AG04450 (cell line): ENCODE measurements at regions of chr6 and their contacts with region 1.

Region 1: DNA sequence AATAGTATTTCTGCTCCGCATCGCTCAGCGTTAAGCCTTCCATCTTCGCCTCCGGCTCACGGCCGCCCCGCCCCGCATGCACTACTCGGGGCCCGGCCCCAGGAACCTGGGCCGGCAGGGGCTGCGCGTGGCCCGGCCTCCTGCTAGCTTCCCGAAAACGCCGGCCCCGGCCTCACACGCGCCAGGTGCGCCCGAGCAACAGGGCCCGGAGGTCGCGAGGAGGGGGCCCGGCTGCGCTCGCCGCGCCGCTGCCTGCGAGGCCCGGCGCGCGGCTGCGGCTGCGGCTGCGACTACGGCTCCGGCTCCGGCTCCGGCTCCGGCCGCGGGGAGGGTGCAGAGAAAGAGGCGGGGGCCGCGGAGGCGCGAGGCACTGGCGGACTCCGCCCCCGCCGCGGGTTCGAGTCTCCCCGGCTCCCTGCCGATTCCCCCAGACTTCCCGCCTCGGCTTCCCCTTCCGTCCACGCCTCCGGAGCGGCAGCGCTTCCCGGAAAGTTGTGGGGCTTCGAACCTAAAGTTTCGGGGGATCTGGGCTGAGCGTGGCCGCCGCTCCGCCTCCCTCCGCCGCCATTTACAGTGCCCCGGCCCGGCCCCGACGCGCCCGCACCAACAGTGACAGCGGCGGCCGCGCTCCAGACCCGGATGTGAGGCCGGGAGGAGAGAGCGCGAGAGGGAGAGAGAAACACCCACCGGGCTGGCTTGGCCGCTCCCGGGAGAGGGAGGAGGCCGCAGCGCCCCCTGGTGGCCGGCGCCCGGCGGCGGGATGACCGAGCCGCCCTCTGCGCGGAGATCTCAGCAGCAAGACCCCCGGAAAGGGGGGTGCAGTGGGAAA is at the start of gene REPS1:
- DNase-seq: peak; percentile 61
- H3K4me3 ChIP-seq: peak within 1 kb of the TSS; percentile 85
- H3K27ac ChIP-seq: peak within 1 kb of the TSS; percentile 52
- H3K27me3 ChIP-seq: no peaks in the 10 kb centered on the region
- CTCF ChIP-seq: peak; percentile 82
- polyA plus RNA-seq, gene REPS1: 30.5 and 36.6 TPM in 2 replicates

Region 2: GRCh38 chr6:138817822-138818308 is 170.0 kb before region 1 on chr6:
- CTCF ChIA-PET with region 1: interaction called, 86 read pairs
- POLR2A ChIA-PET with region 1: no interaction called
- DNase-seq: peak; percentile 4
- H3K4me3 ChIP-seq: no peak overlapping the region
- H3K27ac ChIP-seq: no peak overlapping the region
- H3K27me3 ChIP-seq: no peaks in the 10 kb centered on the region
- CTCF ChIP-seq: no peak

Region 3: DNA sequence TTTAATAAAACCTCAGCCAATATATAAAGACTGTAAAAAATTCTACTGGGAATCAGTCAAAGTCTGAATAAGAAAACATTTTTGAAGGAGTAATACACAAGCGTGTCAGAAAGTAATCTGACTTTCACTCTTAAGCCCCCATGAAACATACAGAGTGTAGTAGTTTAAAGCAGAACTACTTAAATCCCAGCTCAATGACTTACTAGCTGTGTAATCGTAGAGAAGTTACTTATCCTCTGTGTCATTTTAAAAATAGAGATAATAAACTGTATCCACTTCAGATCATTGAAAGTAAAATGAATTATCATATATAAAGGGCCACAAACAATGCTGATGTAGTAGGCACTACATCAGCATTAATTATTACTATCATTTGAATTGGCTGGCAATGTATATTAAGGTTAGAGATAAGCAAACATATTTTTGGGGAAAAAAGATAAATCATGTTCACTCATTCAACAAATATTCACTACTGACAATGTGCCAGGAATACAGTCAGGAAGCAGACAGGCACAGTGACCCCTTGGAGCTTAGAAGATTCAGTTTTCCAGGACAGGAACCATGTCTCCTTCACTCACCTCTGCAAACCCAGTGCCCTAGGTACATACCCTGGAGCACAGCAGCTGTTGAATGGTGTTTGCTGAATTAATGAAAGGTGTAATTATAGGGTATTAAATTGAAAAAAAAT is 14.2 kb before region 1 on chr6:
- CTCF ChIA-PET with region 1: interaction called, 14 read pairs
- POLR2A ChIA-PET with region 1: interaction called, 5 read pairs
- DNase-seq: no peak
- H3K4me3 ChIP-seq: no peak overlapping the region
- H3K27ac ChIP-seq: no peak overlapping the region
- H3K27me3 ChIP-seq: no peaks in the 10 kb centered on the region
- CTCF ChIP-seq: no peak